ENCODE measurements at regions of chr9 and their contacts with region 1.

Region 1: GRCh38 chr9:6034954-6035353 is 19.5 kb upstream of the RANBP6 start:
- DNase-seq: no peak
- ATAC-seq: no peak
- H3K4me3 ChIP-seq: no peak overlapping the region
- H3K27ac ChIP-seq: no peak overlapping the region
- H3K4me1 ChIP-seq: no peaks in the 10 kb centered on the region
- H3K27me3 ChIP-seq: no peaks in the 10 kb centered on the region
- CTCF ChIP-seq: no peak

Region 2: DNA sequence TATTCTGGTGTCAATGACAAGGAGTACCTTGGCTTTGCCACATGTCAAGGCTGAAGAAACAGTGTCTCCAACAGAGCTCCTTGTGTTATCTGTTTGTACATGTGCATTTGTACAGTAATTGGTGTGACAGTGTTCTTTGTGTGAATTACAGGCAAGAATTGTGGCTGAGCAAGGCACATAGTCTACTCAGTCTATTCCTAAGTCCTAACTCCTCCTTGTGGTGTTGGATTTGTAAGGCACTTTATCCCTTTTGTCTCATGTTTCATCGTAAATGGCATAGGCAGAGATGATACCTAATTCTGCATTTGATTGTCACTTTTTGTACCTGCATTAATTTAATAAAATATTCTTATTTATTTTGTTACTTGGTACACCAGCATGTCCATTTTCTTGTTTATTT is 564.8 kb before region 1 on chr9:
- CTCF ChIA-PET with region 1: no interaction called
- POLR2A ChIA-PET with region 1: no interaction called
- in situ Hi-C with region 1: no loop called
- intact Hi-C with region 1: no loop called
- DNase-seq: no peak
- ATAC-seq: no peak
- H3K4me3 ChIP-seq: no peak overlapping the region
- H3K27ac ChIP-seq: no peak overlapping the region
- H3K4me1 ChIP-seq: no peaks in the 10 kb centered on the region
- H3K27me3 ChIP-seq: no peaks in the 10 kb centered on the region
- CTCF ChIP-seq: no peak

Region 3: DNA sequence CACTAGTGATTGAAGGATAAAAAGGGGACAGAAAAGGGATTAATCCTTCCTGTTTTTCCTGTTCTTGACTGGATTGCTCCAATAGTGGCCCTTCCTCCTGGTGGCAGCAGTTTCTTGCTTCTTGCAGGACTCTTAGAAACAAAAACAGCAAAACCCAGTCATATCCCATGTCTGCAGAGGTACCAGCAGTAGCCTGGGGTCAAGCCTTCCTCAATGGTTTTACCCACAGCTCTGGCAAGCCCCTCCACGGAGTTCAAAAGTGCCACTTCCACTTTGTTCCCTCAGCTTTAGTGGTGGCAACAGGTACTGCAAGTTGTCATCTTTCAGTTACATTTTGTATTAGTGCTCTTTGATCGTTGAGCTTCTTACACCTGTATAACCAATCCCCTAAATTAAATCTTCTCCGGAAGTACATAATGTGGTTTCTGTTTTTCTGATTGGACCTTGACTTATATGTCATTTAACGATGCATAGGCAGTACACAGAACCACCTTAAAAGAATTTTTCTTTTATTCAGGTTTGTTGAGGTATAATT is 10.9 kb before region 1 on chr9:
- CTCF ChIA-PET with region 1: no interaction called
- POLR2A ChIA-PET with region 1: interaction called, 12 read pairs
- in situ Hi-C with region 1: no loop called
- intact Hi-C with region 1: no loop called
- DNase-seq: no peak
- ATAC-seq: no peak
- H3K4me3 ChIP-seq: no peak overlapping the region
- H3K27ac ChIP-seq: no peak overlapping the region
- H3K4me1 ChIP-seq: no peaks in the 10 kb centered on the region
- H3K27me3 ChIP-seq: no peaks in the 10 kb centered on the region
- CTCF ChIP-seq: peak; percentile 33